Activated CD4-positive, alpha-beta T cell treated with anti-CD3 and anti-CD28 coated beads, Interleukin-2, amount 10 ng/mL, durations not matched to agents 24 days and 14 days (primary cell): ENCODE measurements at regions of chr1 and their contacts with region 1.

Region 1: DNA sequence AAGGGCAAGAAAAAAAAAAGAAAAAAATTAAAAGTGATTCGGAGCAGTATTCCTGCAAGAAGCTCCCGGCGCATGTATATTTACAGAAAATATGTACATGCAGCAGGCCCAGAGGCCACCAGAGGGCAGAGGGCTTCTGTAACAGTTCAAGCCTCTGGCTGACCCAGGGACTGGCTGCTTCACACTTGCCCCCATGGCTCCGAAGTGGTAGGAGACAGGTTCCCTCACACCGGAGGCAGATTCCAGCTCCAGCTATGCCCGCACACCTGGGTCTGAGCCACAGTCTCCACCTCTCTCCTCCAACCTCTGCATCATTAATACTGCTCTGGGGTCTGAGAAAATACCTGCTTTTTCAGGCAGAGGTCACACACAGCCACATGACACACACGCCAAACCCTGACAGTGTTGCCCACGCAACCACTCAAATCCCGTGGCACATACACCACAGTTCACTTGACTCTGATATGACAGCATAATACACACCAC is 2.2 kb upstream of the ARHGAP30 start:
- DNase-seq: peak; percentile 86
- H3K4me3 Mint-ChIP-seq: no peak overlapping the region
- H3K27ac Mint-ChIP-seq: peak overlapping the region; percentile 69
- H3K4me1 Mint-ChIP-seq: peaks cover 47% of the 10 kb centered on the region
- H3K27me3 Mint-ChIP-seq: no peaks in the 10 kb centered on the region

Region 2: GRCh38 chr1:161045750-161046571 is 26.0 kb before region 1 on chr1 and contains the start of gene USF1:
- intact Hi-C with region 1: loop called (anchors 1 kb)
- DNase-seq: peak; percentile 99
- H3K4me3 Mint-ChIP-seq: peak within 1 kb of the TSS; percentile 84
- H3K27ac Mint-ChIP-seq: peak within 1 kb of the TSS; percentile 97
- H3K4me1 Mint-ChIP-seq: peaks cover 42% of the 10 kb centered on the region
- H3K27me3 Mint-ChIP-seq: no peaks in the 10 kb centered on the region
- total RNA-seq, gene USF1: 46.5 and 48.6 TPM in 2 replicates

Region 3: GRCh38 chr1:161098210-161099068 is 26.5 kb after region 1 on chr1 and contains the start of gene KLHDC9:
- intact Hi-C with region 1: loop called (anchors 1 kb)
- DNase-seq: peak; percentile 92
- H3K4me3 Mint-ChIP-seq: peak within 1 kb of the TSS; percentile 80
- H3K27ac Mint-ChIP-seq: peak within 1 kb of the TSS; percentile 93
- H3K4me1 Mint-ChIP-seq: peaks cover 39% of the 10 kb centered on the region
- H3K27me3 Mint-ChIP-seq: peaks cover 2% of the 10 kb centered on the region
- total RNA-seq, gene KLHDC9: not detected in 2 replicates

Region 4: DNA sequence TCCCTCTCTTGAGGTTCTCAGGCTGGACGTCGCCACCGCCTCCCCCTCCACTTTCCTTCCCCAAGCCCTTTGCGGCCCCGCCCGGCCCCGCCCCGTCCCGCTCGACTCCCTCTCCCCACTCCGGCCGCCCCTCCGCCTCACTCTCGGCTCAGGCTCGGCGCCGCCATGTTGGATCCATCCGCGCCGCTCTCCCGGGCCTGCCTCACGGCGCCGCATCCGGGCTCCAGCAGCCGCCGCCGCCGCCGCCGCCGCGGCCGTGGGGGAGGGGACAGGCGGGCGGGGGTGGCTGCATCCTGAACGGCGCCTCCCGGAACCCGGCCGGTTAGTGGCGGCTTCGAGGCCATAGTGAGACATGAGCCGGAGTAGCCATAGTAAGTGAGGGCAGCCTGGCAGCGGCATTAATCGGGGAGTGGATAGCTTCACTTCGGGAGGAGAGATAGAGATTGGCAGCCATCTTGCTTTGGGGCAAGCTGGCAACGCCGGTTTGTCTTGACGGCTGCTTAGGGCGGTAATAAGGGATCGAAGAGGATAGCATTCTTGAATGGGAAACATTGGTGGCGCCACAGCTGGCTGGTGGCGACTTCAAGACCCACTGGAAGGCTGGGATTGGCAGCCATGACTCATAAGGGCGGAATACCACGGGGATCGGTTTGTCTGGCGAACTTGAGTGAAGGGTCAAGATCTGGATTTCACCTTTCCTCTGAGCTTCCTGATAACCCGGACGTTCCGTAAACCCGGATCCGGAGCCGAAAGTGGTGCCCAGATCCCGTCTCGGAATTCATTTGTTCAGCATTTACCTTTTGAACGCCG is 60.7 kb after region 1 on chr1 and contains the start of gene DEDD:
- intact Hi-C with region 1: loop called (anchors 5 kb)
- DNase-seq: peak; percentile 96
- H3K4me3 Mint-ChIP-seq: no peak within 1 kb of the TSS
- H3K27ac Mint-ChIP-seq: no peak within 1 kb of the TSS
- H3K4me1 Mint-ChIP-seq: peaks cover 44% of the 10 kb centered on the region
- H3K27me3 Mint-ChIP-seq: no peaks in the 10 kb centered on the region
- total RNA-seq, gene DEDD: 45.7 and 46.2 TPM in 2 replicates